WTC11 (cell line): ENCODE measurements at regions of chr22 and their contacts with region 1.

Region 1: DNA sequence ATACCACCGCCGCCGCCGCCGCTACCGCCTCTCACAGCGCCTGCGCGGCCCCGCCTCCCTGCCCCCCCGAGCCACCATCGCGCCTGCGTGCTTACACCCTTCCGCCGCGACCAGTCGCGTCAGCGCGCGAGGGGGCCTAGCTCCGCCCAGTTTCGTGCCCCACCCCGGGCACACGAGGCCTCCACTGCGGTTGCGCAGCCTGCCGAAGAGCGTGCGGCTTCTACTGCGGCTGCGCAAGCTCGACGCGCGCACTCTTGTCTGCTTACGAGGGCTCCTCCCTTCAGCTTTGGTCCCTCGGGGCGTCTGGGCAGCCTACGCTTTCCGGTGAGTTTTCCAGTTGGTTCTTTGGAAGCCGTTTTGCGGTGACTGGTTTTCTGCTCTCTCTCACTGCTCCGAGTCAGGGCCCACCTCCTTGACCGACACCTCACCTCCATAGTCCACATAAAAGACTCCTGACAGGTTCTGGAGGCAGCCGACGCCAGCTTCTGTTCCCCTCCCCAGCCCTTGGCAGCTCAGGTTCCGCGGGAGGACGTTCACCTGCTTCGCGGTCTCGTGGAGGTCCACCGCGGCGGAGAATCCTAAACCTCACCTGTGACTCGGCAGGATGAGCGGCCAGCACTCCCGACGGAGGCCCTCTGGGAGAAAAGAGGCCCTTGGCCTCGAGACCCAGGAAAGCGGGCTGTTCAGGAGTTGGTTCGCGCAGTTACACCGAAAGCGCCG is at the start of gene PITPNB:
- DNase-seq: peak; percentile 99
- ATAC-seq: peak; percentile 87
- H3K4me3 Mint-ChIP-seq: peak within 1 kb of the TSS; percentile 96
- H3K27ac Mint-ChIP-seq: peak within 1 kb of the TSS; percentile 99
- H3K4me1 Mint-ChIP-seq: peaks cover 39% of the 10 kb centered on the region
- H3K27me3 Mint-ChIP-seq: no peaks in the 10 kb centered on the region
- CTCF ChIP-seq: no peak
- total RNA-seq, gene PITPNB: 70.7 to 76.2 TPM (median 71.7 TPM) in 3 replicates

Region 2: GRCh38 chr22:27930331-27931060 is 11.1 kb after region 1 on chr22:
- CTCF ChIA-PET with region 1: interaction called, 11 read pairs
- POLR2A ChIA-PET with region 1: interaction called, 8 read pairs
- DNase-seq: no peak
- ATAC-seq: peak; percentile 69
- H3K4me3 Mint-ChIP-seq: no peak overlapping the region
- H3K27ac Mint-ChIP-seq: peak overlapping the region; percentile 82
- H3K4me1 Mint-ChIP-seq: peaks cover 23% of the 10 kb centered on the region
- H3K27me3 Mint-ChIP-seq: no peaks in the 10 kb centered on the region
- CTCF ChIP-seq: no peak

Region 3: GRCh38 chr22:27997538-27997937 is 78.2 kb after region 1 on chr22:
- CTCF ChIA-PET with region 1: interaction called, 38 read pairs
- POLR2A ChIA-PET with region 1: no interaction called
- DNase-seq: no peak
- ATAC-seq: no peak
- H3K4me3 Mint-ChIP-seq: no peak overlapping the region
- H3K27ac Mint-ChIP-seq: no peak overlapping the region
- H3K4me1 Mint-ChIP-seq: peaks cover 4% of the 10 kb centered on the region
- H3K27me3 Mint-ChIP-seq: no peaks in the 10 kb centered on the region
- CTCF ChIP-seq: no peak